Endothelial cell of umbilical vein (primary cell): ENCODE measurements at regions of chr1 and their contacts with region 1.

Region 1: GRCh38 chr1:173867753-173868265 is at the start of gene GAS5:
- DNase-seq: peak; percentile 99
- H3K4me3 ChIP-seq: peak within 1 kb of the TSS; percentile 36 to 99 (median 90)
- H3K27ac ChIP-seq: peak within 1 kb of the TSS; percentile 64
- H3K4me1 ChIP-seq: peaks cover 48% of the 10 kb centered on the region
- H3K27me3 ChIP-seq: no peaks in the 10 kb centered on the region
- CTCF ChIP-seq: no peak
- POLR2A ChIP-seq: peak; percentile 100
- total RNA-seq, gene GAS5: 302 and 343 TPM in 2 replicates

Region 2: GRCh38 chr1:173241528-173242347 is 626.1 kb before region 1 on chr1:
- CTCF ChIA-PET with region 1: no interaction called
- POLR2A ChIA-PET with region 1: no interaction called
- dilution Hi-C with region 1: no loop called
- intact Hi-C with region 1: no loop called
- DNase-seq: no peak
- H3K4me3 ChIP-seq: no peak overlapping the region
- H3K27ac ChIP-seq: no peak overlapping the region
- H3K4me1 ChIP-seq: no peaks in the 10 kb centered on the region
- H3K27me3 ChIP-seq: no peaks in the 10 kb centered on the region
- CTCF ChIP-seq: no peak
- POLR2A ChIP-seq: no peak

Region 3: GRCh38 chr1:173429471-173430402 is 438.1 kb before region 1 on chr1:
- CTCF ChIA-PET with region 1: interaction called, 6 read pairs
- POLR2A ChIA-PET with region 1: no interaction called
- dilution Hi-C with region 1: no loop called
- intact Hi-C with region 1: loop called (anchors 2 kb)
- DNase-seq: peak; percentile 75
- H3K4me3 ChIP-seq: no peak overlapping the region
- H3K27ac ChIP-seq: peak overlapping the region; percentile 64
- H3K4me1 ChIP-seq: peaks cover 12% of the 10 kb centered on the region
- H3K27me3 ChIP-seq: no peaks in the 10 kb centered on the region
- CTCF ChIP-seq: peak; percentile 56 to 65
- POLR2A ChIP-seq: no peak

Region 4: DNA sequence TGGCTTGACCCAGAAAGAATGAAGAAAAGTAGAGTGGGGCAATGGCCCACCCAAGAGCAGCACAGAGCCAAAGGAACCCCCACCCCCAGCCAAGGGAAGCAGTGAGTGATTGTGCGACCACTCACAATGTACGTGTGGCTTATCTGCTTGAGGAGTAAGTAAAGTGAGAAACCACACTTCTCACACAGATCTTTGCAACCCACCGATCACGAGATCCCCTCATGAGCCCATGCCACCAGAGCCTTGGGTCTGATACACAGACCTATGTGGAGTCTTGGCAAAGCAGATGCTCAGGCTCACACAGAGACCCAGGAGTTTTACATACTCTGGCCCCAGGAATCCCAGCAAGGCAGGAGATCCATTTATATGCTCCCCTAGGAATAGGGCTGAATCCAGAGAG is 250.9 kb before region 1 on chr1:
- CTCF ChIA-PET with region 1: no interaction called
- POLR2A ChIA-PET with region 1: no interaction called
- dilution Hi-C with region 1: no loop called
- intact Hi-C with region 1: no loop called
- DNase-seq: no peak
- H3K4me3 ChIP-seq: no peak overlapping the region
- H3K27ac ChIP-seq: no peak overlapping the region
- H3K4me1 ChIP-seq: no peaks in the 10 kb centered on the region
- H3K27me3 ChIP-seq: no peaks in the 10 kb centered on the region
- CTCF ChIP-seq: no peak
- POLR2A ChIP-seq: no peak

Region 5: GRCh38 chr1:173824331-173825081 is 43.3 kb before region 1 on chr1 and contains the starts of genes CENPL and DARS2:
- CTCF ChIA-PET with region 1: interaction called, 6 read pairs
- POLR2A ChIA-PET with region 1: interaction called, 18 read pairs
- dilution Hi-C with region 1: no loop called
- intact Hi-C with region 1: loop called (anchors 1 kb)
- DNase-seq: peak; percentile 98
- H3K4me3 ChIP-seq: peak within 1 kb of the TSS; percentile 87 to 92 (median 87)
- H3K27ac ChIP-seq: peak within 1 kb of the TSS; percentile 92
- H3K4me1 ChIP-seq: peaks cover 15% of the 10 kb centered on the region
- H3K27me3 ChIP-seq: no peaks in the 10 kb centered on the region
- CTCF ChIP-seq: no peak
- POLR2A ChIP-seq: peak; percentile 85
- total RNA-seq, gene CENPL: 19.0 and 20.8 TPM in 2 replicates
- total RNA-seq, gene DARS2: 30.5 and 33.6 TPM in 2 replicates

Region 6: GRCh38 chr1:173914366-173914871 is 46.6 kb after region 1 on chr1:
- CTCF ChIA-PET with region 1: no interaction called
- POLR2A ChIA-PET with region 1: interaction called, 4 read pairs
- dilution Hi-C with region 1: no loop called
- intact Hi-C with region 1: loop called (anchors 2 kb)
- DNase-seq: peak; percentile 39
- H3K4me3 ChIP-seq: no peak overlapping the region
- H3K27ac ChIP-seq: no peak overlapping the region
- H3K4me1 ChIP-seq: no peaks in the 10 kb centered on the region
- H3K27me3 ChIP-seq: no peaks in the 10 kb centered on the region
- CTCF ChIP-seq: peak; percentile 71 to 72
- POLR2A ChIP-seq: no peak

Region 7: DNA sequence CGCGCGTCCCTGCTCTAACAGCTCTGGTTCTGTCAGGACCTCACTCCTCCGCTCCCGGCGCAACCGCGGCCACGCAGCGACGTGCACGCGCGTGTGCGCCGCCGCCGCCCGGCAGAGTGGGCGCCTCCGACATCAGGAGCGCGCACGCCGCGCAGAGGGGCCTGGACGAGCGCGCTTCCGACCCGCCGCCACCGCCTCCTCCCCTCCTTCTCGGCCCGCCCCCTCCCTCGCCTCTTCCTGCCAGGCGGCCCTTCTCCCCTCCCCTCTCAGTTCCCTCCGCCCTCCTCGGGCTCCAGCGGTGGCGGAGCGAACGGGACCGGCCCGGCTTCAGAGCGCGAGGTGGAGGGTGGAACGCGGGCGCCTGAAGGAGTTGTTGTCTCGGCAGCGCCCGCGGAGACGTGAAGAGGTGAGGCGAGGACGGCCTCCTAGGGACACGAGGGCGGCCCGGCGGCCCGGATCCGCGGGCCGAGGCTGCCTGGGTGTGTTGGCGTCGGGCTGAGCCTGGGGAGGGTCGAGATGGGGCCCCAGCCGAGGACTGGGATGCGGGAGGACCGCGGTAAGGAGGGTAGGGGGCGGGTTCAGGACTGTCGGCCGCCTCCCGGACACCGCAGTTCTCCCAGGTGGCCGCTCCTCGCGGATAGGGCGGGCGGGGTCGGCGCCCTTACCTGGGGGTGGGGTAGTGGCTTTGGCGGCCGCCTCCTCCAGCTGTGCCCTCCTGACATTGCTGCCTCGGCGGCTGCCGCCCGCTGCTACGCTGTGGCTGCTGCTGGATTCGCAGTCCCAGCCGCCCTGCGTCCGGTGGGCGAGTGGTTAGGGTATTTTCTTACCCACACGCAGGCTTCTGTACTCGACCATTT is 291.7 kb after region 1 on chr1 and contains the start of gene RABGAP1L:
- CTCF ChIA-PET with region 1: no interaction called
- POLR2A ChIA-PET with region 1: no interaction called
- dilution Hi-C with region 1: no loop called
- intact Hi-C with region 1: loop called (anchors 2 kb)
- DNase-seq: peak; percentile 96
- H3K4me3 ChIP-seq: peak within 1 kb of the TSS; percentile 77 to 91 (median 81)
- H3K27ac ChIP-seq: no peak within 1 kb of the TSS
- H3K4me1 ChIP-seq: peaks cover 8% of the 10 kb centered on the region
- H3K27me3 ChIP-seq: no peaks in the 10 kb centered on the region
- CTCF ChIP-seq: no peak
- POLR2A ChIP-seq: no peak
- total RNA-seq, gene RABGAP1L: 20.7 and 22.2 TPM in 2 replicates